Activated CD4-positive, alpha-beta T cell treated with anti-CD3 and anti-CD28 coated beads, Interleukin-2, amount 10 ng/mL, durations not matched to agents 7 days and 5 days (primary cell): ENCODE measurements at regions of chr12 and their contacts with region 1.

Region 1: DNA sequence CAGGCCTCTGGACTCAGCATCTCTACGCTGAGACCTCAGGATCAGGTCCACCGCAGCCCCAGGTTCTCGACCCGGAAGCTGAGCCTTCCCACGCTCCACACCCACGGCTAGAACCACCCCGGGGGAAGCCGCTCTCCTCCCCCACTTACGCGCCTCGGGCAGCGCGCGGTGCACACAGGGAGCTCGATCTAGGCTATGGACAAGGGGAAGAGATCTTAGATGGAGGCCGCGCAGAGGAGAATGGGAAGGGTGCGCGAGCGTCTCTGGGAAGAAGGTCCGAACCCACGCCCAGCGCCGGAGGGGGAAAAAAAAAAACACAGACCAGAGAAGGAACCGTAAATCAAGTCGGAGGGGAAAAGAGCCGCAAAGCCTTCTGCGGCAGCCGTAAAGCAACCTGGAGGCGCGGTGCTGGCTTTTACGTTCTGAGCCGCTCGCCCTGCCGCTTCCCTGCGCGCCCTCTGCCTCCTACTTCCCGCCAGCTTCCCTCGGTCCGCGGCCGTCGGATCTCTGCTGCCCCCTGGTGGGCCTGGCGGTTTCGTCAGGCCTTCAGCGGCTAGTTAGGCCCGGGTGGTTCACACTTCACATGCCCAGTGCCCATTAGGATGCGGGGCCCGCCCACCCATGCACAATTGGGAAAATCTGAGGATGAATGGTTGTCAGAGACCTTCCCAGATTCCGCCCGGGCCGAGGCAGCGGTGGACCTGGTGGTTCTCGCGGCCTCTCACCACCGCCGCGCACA is at the start of gene RAD52:
- DNase-seq: peak; percentile 97
- H3K4me3 Mint-ChIP-seq: peak within 1 kb of the TSS; percentile 98
- H3K27ac Mint-ChIP-seq: peak within 1 kb of the TSS; percentile 91
- H3K4me1 Mint-ChIP-seq: peaks cover 36% of the 10 kb centered on the region
- H3K27me3 Mint-ChIP-seq: no peaks in the 10 kb centered on the region
- total RNA-seq, gene RAD52: 18.5 to 19.4 TPM

Region 2: DNA sequence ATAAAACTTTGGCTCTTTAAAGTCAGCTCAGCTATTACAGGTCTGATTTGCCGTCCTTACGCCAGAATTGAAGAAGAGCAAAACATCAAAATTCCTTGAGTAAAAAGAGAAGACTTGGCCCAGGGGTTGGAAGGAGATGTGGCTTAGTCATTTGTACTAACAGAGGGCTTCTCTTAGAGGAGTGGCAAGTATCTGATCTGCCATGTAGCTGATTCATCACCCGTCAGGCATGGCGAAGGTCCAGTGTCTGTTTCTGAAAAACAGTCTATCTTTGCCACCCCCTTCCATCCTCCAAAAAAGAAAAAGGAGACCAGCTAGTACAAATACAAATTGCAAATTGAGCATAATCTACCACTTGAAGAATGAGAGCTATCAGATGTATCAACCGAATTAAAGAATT is 92.0 kb before region 1 on chr12:
- CTCF ChIA-PET with region 1: no interaction called
- POLR2A ChIA-PET with region 1: no interaction called
- DNase-seq: no peak
- H3K4me3 Mint-ChIP-seq: no peak overlapping the region
- H3K27ac Mint-ChIP-seq: no peak overlapping the region
- H3K4me1 Mint-ChIP-seq: peaks cover 7% of the 10 kb centered on the region
- H3K27me3 Mint-ChIP-seq: no peaks in the 10 kb centered on the region

Region 3: DNA sequence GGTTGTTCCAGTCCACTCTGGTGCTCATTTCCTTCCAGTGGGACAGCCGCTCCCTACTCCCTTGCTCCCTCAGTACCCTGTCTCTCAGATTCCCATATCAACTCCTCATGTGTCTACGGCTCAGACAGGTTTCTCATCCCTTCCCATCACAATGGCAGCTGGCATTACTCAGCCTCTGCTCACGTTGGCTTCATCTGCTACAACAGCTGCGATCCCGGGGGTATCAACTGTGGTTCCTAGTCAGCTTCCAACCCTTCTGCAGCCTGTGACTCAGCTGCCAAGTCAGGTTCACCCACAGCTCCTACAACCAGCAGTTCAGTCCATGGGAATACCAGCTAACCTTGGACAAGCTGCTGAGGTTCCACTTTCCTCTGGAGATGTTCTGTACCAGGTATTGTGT is 70.0 kb before region 1 on chr12:
- CTCF ChIA-PET with region 1: no interaction called
- POLR2A ChIA-PET with region 1: no interaction called
- DNase-seq: no peak
- H3K4me3 Mint-ChIP-seq: no peak overlapping the region
- H3K27ac Mint-ChIP-seq: peak overlapping the region; percentile 6
- H3K4me1 Mint-ChIP-seq: peaks cover 4% of the 10 kb centered on the region
- H3K27me3 Mint-ChIP-seq: no peaks in the 10 kb centered on the region

Region 4: DNA sequence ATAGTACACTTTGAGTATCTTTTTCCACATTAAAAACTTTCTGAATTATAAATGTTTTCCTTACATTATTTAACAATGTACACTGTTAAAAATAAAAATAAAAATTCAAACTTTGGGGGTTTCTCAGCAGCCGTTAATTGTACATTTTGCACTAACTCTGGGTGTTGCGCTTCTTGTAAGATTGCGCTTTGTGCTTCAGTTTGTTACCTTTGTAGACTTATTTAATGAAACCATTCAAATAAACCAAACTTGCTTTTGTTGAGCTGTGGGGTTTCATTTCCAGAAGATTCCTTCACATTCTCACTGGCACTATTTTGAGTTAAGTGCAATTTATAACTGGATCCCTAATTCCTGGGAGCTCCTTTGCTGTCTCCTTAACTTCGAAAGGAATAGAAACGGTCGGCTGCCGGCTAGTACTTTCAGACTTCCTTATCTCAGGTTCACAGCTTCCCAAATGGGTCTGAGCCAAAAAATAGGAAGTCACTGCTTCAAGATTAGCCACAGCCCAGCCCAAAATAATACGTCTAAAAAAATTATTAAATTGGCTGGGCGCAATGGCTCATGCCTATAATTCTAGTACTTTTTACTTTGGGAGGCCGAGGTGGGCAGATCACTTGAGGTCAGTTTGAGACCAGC is 38.3 kb before region 1 on chr12:
- CTCF ChIA-PET with region 1: no interaction called
- POLR2A ChIA-PET with region 1: no interaction called
- DNase-seq: no peak
- H3K4me3 Mint-ChIP-seq: no peak overlapping the region
- H3K27ac Mint-ChIP-seq: peak overlapping the region; percentile 25
- H3K4me1 Mint-ChIP-seq: peaks cover 25% of the 10 kb centered on the region
- H3K27me3 Mint-ChIP-seq: no peaks in the 10 kb centered on the region

Region 5: DNA sequence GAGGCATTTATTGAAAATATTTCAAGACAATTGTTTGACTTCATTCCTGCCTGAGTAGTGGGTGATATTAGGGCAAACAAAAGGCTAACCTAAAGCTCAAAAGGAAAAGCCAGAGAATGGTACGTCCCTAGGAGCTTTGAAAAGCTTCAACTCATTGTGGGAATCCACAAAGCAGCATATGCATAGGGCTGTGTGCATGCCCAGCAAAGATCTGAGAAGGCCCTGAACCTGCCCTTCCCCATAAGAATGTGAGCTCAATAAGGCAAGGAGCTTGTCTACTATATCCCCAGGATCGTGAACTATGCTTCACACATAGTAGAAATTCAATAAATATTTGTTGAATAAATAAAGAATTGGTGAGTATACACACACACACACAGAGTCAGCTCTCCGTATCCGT is 18.9 kb after region 1 on chr12:
- CTCF ChIA-PET with region 1: interaction called, 13 read pairs
- POLR2A ChIA-PET with region 1: no interaction called
- DNase-seq: no peak
- H3K4me3 Mint-ChIP-seq: no peak overlapping the region
- H3K27ac Mint-ChIP-seq: no peak overlapping the region
- H3K4me1 Mint-ChIP-seq: no peaks in the 10 kb centered on the region
- H3K27me3 Mint-ChIP-seq: peaks cover 2% of the 10 kb centered on the region

Region 6: GRCh38 chr12:990661-991349 is 41.2 kb after region 1 on chr12 and contains the start of gene ERC1:
- CTCF ChIA-PET with region 1: interaction called, 12 read pairs
- POLR2A ChIA-PET with region 1: interaction called, 5 read pairs
- DNase-seq: peak; percentile 75
- H3K4me3 Mint-ChIP-seq: peak within 1 kb of the TSS; percentile 83
- H3K27ac Mint-ChIP-seq: peak within 1 kb of the TSS; percentile 92
- H3K4me1 Mint-ChIP-seq: peaks cover 47% of the 10 kb centered on the region
- H3K27me3 Mint-ChIP-seq: no peaks in the 10 kb centered on the region
- total RNA-seq, gene ERC1: 38.7 to 43.4 TPM

Region 7: DNA sequence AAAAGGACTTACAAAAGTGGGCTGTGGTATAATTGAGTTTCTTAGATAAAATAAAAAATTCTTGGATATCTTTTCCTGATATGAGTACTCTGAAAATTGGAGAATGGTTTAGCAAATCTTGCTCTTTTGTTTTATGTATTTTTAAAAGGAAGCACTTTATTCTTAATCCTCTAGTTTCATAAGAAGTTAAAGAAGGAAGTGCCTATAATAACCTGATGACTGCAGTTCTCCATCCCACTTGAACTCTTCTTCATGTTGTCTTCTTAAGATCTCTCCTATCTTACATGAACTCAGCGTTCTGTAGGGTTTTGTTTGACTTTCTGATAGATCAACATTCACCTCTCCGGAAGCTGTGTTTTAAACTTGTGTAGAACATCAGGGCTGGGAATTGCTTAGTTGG is 312.4 kb after region 1 on chr12:
- CTCF ChIA-PET with region 1: no interaction called
- POLR2A ChIA-PET with region 1: no interaction called
- DNase-seq: no peak
- H3K4me3 Mint-ChIP-seq: no peak overlapping the region
- H3K27ac Mint-ChIP-seq: no peak overlapping the region
- H3K4me1 Mint-ChIP-seq: peaks cover 3% of the 10 kb centered on the region
- H3K27me3 Mint-ChIP-seq: no peaks in the 10 kb centered on the region